IMR-90 (cell line): ENCODE measurements at regions of chr3 and their contacts with region 1.

Region 1: DNA sequence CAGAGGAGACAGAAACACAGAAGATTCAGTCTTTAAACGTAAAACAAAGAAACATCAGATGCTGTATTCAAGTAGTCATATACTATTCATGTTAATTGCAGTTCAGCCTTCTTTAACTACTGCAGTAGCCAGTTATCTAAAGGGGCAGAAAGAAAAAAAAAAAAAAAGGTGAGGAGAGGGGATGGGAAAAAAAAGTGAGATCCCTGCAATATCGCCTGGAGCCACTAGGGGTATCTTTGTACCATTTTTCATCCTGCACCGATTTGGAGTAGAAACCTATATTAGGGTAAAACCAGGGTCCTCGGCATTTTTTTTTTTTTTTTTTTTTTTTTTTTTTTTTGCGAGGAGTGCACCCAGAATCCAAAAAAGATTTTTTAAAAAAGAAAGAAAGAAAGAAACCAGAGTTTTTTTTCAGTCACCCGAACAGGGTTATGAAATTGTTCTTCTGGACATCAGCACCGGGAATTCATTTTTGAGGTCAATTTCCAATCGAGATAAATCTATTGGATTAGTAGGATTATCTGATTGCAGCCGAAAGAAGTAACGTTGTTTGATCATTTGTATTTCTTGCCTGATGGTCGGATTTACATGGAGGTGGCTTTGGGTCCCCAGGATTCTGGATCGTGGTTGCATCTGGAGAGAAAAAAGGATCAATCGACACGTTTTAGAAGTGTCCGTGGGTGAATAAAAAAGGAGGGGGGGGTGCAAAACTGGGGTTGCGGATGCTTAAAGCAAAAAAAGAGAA is 186.7 kb downstream of the NLGN1 start:
- DNase-seq: peak; percentile 44
- ATAC-seq: peak; percentile 57; the same call in 1 of the 2 replicates
- H3K4me3 ChIP-seq: peak overlapping the region; percentile 62
- H3K27ac ChIP-seq: no peak overlapping the region
- H3K4me1 ChIP-seq: no peaks in the 10 kb centered on the region
- H3K27me3 ChIP-seq: no peaks in the 10 kb centered on the region
- CTCF ChIP-seq: peak; percentile 73
- POLR2A ChIP-seq: no peak
- RAD21 ChIP-seq: peak; percentile 71

Region 2: DNA sequence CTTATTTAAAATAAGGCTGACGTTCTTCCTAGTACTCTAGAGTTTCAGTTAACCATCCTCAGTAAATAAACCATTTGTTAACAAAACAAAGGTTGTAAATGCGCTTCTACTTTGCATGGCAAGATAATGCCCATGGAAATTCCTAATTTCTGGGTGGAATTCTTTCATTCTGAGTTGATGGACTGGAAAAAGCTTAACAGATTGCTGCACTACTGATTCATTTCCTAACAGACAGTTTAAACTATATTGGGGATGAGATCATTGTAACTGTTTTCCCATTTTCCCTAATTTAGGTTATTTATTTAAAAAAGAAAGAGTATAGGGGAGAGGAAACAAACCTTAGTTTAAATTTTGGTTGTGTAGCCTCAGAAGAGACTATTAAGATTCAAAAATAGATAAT is 155.5 kb after region 1 on chr3:
- CTCF ChIA-PET with region 1: interaction called, 3 read pairs
- POLR2A ChIA-PET with region 1: no interaction called
- dilution Hi-C with region 1: no loop called
- in situ Hi-C with region 1: no loop called
- intact Hi-C with region 1: loop called (anchors 2 kb)
- DNase-seq: peak; percentile 31
- ATAC-seq: peak; percentile 36
- H3K4me3 ChIP-seq: no peak overlapping the region
- H3K27ac ChIP-seq: no peak overlapping the region
- H3K4me1 ChIP-seq: peaks cover 2% of the 10 kb centered on the region; the same call in 1 of the 2 replicates
- H3K27me3 ChIP-seq: no peaks in the 10 kb centered on the region
- CTCF ChIP-seq: no peak
- POLR2A ChIP-seq: no peak
- RAD21 ChIP-seq: no peak

Region 3: DNA sequence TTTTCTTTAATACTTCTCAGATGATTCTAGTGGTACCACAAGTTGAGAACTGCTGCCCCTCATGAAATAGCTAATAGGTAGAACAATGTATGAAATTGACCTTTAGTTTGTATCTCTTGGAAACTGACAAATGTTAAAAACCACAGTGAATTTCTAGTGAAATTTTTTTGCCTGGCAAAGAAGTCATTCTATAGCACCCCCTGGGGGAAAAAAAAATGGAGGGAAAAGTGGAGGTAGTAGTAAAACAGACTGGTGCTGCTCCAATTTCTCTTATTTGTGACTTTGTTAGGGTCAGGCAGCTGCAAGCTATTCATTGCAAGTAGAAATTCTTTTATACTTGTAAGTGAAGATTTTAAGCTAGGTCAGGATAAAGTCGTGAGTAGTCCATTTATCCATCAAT is 418.3 kb after region 1 on chr3:
- CTCF ChIA-PET with region 1: no interaction called
- POLR2A ChIA-PET with region 1: no interaction called
- dilution Hi-C with region 1: no loop called
- in situ Hi-C with region 1: no loop called
- intact Hi-C with region 1: loop called (anchors 2 kb)
- DNase-seq: no peak
- ATAC-seq: no peak
- H3K4me3 ChIP-seq: no peak overlapping the region
- H3K27ac ChIP-seq: no peak overlapping the region
- H3K4me1 ChIP-seq: no peaks in the 10 kb centered on the region
- H3K27me3 ChIP-seq: no peaks in the 10 kb centered on the region
- CTCF ChIP-seq: peak; percentile 26; the same call in 1 of the 2 replicates
- POLR2A ChIP-seq: no peak
- RAD21 ChIP-seq: no peak; the same call in 1 of the 2 replicates

Region 4: GRCh38 chr3:174089592-174089991 is 505.3 kb after region 1 on chr3:
- CTCF ChIA-PET with region 1: no interaction called
- POLR2A ChIA-PET with region 1: no interaction called
- dilution Hi-C with region 1: no loop called
- in situ Hi-C with region 1: no loop called
- intact Hi-C with region 1: loop called (anchors 1 kb)
- DNase-seq: no peak
- ATAC-seq: no peak
- H3K4me3 ChIP-seq: no peak overlapping the region
- H3K27ac ChIP-seq: no peak overlapping the region
- H3K4me1 ChIP-seq: peaks cover 2% of the 10 kb centered on the region; the same call in 1 of the 2 replicates
- H3K27me3 ChIP-seq: no peaks in the 10 kb centered on the region
- CTCF ChIP-seq: no peak
- POLR2A ChIP-seq: no peak
- RAD21 ChIP-seq: no peak

Region 5: DNA sequence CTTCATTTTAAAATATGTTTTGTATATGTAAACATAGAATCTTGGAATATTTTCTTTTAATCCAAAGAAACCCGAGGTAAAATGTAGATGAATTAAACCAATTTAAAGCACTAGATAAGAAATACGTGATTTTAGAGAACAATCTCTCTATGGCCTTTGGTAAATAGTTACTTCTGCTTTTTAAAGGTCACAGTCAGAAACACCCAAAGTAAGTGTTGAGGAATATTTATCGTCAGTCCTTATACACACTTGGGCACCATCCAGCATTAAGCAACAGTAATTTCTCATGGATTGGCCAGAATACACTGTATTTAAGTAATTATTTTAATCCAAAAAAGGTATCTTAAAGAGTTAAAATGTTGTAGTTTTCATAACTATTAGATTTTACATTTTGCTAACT is 526.5 kb after region 1 on chr3:
- CTCF ChIA-PET with region 1: no interaction called
- POLR2A ChIA-PET with region 1: no interaction called
- dilution Hi-C with region 1: no loop called
- in situ Hi-C with region 1: no loop called
- intact Hi-C with region 1: loop called (anchors 5 kb)
- DNase-seq: no peak
- ATAC-seq: no peak
- H3K4me3 ChIP-seq: no peak overlapping the region
- H3K27ac ChIP-seq: no peak overlapping the region
- H3K4me1 ChIP-seq: no peaks in the 10 kb centered on the region
- H3K27me3 ChIP-seq: no peaks in the 10 kb centered on the region
- CTCF ChIP-seq: no peak
- POLR2A ChIP-seq: no peak
- RAD21 ChIP-seq: no peak

Region 6: DNA sequence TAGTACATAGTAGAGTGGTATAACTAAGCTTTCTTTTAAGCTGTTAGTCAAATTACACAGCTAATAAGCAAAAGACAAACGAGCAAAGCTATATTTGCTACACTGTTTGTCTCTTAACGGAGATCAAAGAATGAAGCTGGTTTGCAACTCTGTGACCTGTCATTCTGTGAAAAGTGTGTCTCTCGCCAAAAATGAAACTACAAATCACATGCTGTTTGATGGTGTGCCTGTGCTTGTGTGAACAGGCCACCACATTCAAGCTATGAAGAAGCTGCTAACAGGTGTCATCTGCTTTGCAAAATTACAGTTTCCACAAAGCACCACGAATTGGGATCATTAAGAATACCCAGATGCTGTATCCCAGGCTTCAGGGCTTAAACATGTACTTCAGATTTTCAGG is 607.1 kb after region 1 on chr3:
- CTCF ChIA-PET with region 1: no interaction called
- POLR2A ChIA-PET with region 1: no interaction called
- dilution Hi-C with region 1: no loop called
- in situ Hi-C with region 1: no loop called
- intact Hi-C with region 1: loop called (anchors 10 kb)
- DNase-seq: no peak
- ATAC-seq: no peak
- H3K4me3 ChIP-seq: no peak overlapping the region
- H3K27ac ChIP-seq: no peak overlapping the region
- H3K4me1 ChIP-seq: peaks cover 4% of the 10 kb centered on the region
- H3K27me3 ChIP-seq: no peaks in the 10 kb centered on the region
- CTCF ChIP-seq: no peak
- POLR2A ChIP-seq: no peak
- RAD21 ChIP-seq: no peak

Region 7: GRCh38 chr3:174408310-174408709 is 824.0 kb after region 1 on chr3:
- CTCF ChIA-PET with region 1: no interaction called
- POLR2A ChIA-PET with region 1: no interaction called
- dilution Hi-C with region 1: no loop called
- in situ Hi-C with region 1: loop called (anchors 25 kb)
- intact Hi-C with region 1: no loop called
- DNase-seq: peak; percentile 58
- ATAC-seq: peak; percentile 51; the same call in 1 of the 2 replicates
- H3K4me3 ChIP-seq: no peak overlapping the region
- H3K27ac ChIP-seq: no peak overlapping the region
- H3K4me1 ChIP-seq: 0 out of 2 replicates have a peak, but pooled peaks cover 2% of the 10 kb centered on the region
- H3K27me3 ChIP-seq: no peaks in the 10 kb centered on the region
- CTCF ChIP-seq: no peak
- POLR2A ChIP-seq: no peak
- RAD21 ChIP-seq: no peak